ENCODE measurements at regions of chr17 and their contacts with region 1.

Region 1: GRCh38 chr17:42388381-42389134 is at the start of gene STAT3:
- DNase-seq: peak; percentile 100
- ATAC-seq: peak; percentile 94
- H3K4me3 Mint-ChIP-seq: peak within 1 kb of the TSS; percentile 89
- H3K27ac Mint-ChIP-seq: peak within 1 kb of the TSS; percentile 99
- H3K4me1 Mint-ChIP-seq: peaks cover 51% of the 10 kb centered on the region
- H3K27me3 Mint-ChIP-seq: no peaks in the 10 kb centered on the region
- total RNA-seq, gene STAT3: 94.7 to 101 TPM

Region 2: DNA sequence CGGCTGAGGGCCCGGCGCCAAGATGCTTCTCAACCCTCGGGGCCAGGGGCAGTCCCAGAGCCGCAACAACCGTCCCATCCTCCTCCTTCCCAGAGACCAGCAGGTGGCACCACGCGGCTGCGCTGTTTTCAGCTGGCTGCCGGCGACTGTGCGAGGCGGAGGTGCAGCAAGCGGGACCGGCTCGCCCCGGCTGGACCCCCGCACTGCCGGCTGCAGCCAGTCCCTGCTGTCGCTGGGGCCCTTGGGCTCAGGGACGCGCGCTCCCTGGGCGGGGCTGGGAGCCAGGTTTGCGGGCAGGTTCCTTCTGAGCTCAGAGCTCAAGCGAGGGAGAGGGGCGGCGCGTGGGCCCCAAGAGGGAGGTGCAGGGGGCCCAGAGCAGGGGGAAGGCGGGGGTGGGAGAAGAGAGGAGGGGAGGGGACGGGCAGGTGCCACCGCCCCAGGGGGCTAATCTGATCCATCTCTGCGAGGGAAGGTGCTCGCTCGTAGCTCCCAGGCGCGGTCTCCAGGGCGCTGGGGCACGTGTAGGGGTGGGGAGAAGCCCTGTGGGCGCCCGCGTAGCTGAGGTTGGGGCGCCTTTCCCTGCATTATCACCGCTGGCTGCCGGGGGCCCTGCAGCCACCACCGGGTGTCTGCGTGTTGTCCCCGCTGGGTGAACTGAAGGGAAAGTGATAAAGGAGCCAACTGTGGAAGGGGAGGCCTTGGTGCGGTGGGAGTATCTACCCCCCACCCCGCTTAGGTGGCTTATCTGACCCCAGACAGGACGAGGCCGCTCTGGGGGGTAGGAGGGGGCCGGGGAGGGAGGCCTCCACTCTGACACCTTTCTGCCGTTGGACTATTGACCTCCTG is 76.0 kb before region 1 on chr17:
- CTCF ChIA-PET with region 1: interaction called, 35 read pairs
- POLR2A ChIA-PET with region 1: interaction called, 3 read pairs
- DNase-seq: peak; percentile 85
- ATAC-seq: peak; percentile 77
- H3K4me3 Mint-ChIP-seq: peak overlapping the region; percentile 39
- H3K27ac Mint-ChIP-seq: peak overlapping the region; percentile 67
- H3K4me1 Mint-ChIP-seq: peaks cover 60% of the 10 kb centered on the region
- H3K27me3 Mint-ChIP-seq: no peaks in the 10 kb centered on the region

Region 3: DNA sequence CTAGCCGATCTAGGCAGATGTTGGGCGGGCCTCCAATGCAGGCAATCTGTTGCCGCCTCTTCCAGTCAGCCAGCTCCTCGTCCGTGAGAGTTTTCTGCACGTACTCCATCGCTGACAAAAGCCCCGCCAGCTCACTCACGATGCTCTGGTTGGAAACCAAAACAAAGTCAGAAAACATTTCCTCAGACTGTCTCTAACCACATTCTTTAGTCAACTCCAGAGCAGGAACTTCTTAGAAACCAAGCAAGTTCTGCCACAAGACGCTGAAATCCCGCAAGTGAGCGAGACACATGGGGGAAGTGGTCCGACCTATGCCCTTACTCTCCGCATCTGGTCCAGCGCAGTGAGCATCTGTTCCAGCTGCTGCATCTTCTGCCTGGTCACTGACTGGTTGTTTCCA is 51.1 kb before region 1 on chr17:
- CTCF ChIA-PET with region 1: interaction called, 12 read pairs
- POLR2A ChIA-PET with region 1: interaction called, 24 read pairs
- DNase-seq: peak; percentile 87
- ATAC-seq: peak; percentile 83
- H3K4me3 Mint-ChIP-seq: peak overlapping the region; percentile 51
- H3K27ac Mint-ChIP-seq: peak overlapping the region; percentile 81
- H3K4me1 Mint-ChIP-seq: peaks cover 67% of the 10 kb centered on the region
- H3K27me3 Mint-ChIP-seq: no peaks in the 10 kb centered on the region

Region 4: DNA sequence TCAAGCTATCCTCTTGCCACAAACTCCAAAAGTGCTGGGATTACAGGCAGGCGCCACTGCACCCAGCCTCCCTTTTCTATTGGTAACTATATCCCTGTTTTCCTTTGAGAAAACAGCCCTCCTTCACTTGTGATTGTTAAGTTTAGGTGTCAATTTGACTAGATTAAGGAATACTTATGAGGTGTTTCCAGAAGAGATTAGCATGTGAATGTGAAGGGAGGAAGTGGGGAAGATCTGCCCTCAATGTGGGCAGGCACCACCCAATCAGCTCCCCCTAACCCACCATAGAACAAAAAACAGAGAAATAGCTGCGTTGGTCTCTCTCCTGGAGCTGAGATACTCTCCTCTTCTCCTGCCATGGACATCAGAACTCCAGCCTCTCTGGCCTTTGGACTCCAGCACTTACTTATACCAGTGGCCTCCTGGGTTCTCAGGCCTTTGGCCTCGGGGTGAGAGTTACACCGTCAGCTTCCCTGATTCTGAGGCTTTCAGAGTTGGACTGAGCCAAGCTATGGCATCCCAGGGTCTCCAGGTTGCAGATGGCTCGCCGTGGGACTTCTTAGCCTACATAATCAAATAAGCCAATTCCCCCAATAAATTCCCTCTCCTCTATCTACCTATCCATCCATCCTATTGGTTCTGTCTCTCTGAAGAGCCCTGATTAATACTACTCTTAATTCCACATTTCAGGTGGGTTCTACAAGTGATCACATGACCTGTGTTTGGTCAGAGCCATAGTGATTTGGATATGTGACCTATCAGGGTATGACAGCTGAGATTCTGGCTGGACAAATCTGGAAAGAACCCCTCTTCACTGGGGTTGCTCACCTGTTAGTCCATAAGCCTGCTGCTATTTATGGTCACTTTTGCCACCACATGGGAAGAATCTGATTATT is 11.6 kb after region 1 on chr17:
- CTCF ChIA-PET with region 1: interaction called, 74 read pairs
- POLR2A ChIA-PET with region 1: interaction called, 6 read pairs
- DNase-seq: peak; percentile 37
- ATAC-seq: peak; percentile 53
- H3K4me3 Mint-ChIP-seq: peak overlapping the region; percentile 31
- H3K27ac Mint-ChIP-seq: peak overlapping the region; percentile 71
- H3K4me1 Mint-ChIP-seq: peaks cover 28% of the 10 kb centered on the region
- H3K27me3 Mint-ChIP-seq: no peaks in the 10 kb centered on the region

Measured in activated CD8-positive, alpha-beta T cell treated with anti-CD3 and anti-CD28 coated beads, Interleukin-2, amount 10 ng/mL, durations not matched to agents 7 days and 5 days (primary cell).